ENCODE measurements at regions of chr2 and their contacts with region 1.

Region 1: DNA sequence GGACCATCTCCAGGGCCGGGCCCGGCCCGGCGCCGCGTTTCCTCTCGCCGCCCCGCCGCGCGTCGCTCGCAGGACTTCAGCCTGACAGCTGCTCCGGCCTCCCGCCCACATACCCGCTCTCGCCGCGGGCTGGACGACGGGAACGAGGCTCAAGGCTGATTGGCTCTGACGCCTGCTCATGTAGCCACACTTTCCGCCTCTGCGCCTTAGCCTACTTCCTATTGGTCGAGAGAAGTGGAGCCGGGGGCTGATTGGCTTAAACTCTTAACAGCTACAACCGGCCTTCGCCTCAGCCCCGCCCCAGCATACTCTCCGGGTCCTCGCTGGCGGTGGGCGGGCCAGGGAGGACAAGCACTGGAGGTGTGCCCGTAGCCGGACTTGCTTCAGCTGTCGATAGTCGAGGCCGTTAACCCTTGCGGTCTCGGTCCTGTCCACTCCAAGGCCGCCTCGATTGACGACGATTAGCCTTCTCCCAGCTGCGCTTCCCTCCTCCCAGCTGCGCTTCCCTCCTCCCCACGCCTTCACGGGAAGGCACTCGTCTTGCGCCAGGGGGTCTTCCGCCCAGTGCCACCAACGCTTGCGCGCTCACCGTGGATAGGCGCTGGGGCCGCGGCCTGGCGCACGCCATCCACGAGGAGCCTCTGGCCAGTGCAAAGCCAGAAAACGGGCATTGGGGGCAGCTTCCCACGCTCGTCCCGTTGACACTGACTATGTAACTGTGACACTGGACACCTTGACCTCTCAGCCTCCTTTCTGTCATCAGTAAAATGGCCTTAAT is at the start of gene PRADC1:
- DNase-seq: peak; percentile 85 to 97 (median 94)
- ATAC-seq: peak; percentile 77
- H3K4me3 ChIP-seq: peak within 1 kb of the TSS; percentile 80 to 98
- H3K4me3 Mint-ChIP-seq: peak within 1 kb of the TSS; percentile 97
- H3K27ac ChIP-seq: peak within 1 kb of the TSS; percentile 82 to 89
- H3K27ac Mint-ChIP-seq: peak within 1 kb of the TSS; percentile 97
- H3K4me1 ChIP-seq: peaks cover 23% of the 10 kb centered on the region
- H3K4me1 Mint-ChIP-seq: peaks cover 43% of the 10 kb centered on the region
- H3K27me3 ChIP-seq: no peaks in the 10 kb centered on the region
- H3K27me3 Mint-ChIP-seq: no peaks in the 10 kb centered on the region
- CTCF ChIP-seq: no peak
- total RNA-seq, gene PRADC1: 2.4 to 3.4 TPM

Region 2: GRCh38 chr2:73071360-73072133 is 161.8 kb before region 1 on chr2 and contains the start of gene SFXN5:
- CTCF ChIA-PET with region 1: no interaction called
- POLR2A ChIA-PET with region 1: interaction called, 12 read pairs
- intact Hi-C with region 1: loop called (anchors 1 kb)
- DNase-seq: peak; percentile 89 to 98 (median 95)
- ATAC-seq: peak; percentile 82
- H3K4me3 ChIP-seq: peak within 1 kb of the TSS; percentile 94 to 95
- H3K4me3 Mint-ChIP-seq: peak within 1 kb of the TSS; percentile 96
- H3K27ac ChIP-seq: peak within 1 kb of the TSS; percentile 73 to 86
- H3K27ac Mint-ChIP-seq: peak within 1 kb of the TSS; percentile 92
- H3K4me1 ChIP-seq: peaks cover 13% of the 10 kb centered on the region
- H3K4me1 Mint-ChIP-seq: peaks cover 41% of the 10 kb centered on the region
- H3K27me3 ChIP-seq: no peaks in the 10 kb centered on the region
- H3K27me3 Mint-ChIP-seq: no peaks in the 10 kb centered on the region
- CTCF ChIP-seq: no peak
- total RNA-seq, gene SFXN5: 6.1 to 9.3 TPM

Region 3: DNA sequence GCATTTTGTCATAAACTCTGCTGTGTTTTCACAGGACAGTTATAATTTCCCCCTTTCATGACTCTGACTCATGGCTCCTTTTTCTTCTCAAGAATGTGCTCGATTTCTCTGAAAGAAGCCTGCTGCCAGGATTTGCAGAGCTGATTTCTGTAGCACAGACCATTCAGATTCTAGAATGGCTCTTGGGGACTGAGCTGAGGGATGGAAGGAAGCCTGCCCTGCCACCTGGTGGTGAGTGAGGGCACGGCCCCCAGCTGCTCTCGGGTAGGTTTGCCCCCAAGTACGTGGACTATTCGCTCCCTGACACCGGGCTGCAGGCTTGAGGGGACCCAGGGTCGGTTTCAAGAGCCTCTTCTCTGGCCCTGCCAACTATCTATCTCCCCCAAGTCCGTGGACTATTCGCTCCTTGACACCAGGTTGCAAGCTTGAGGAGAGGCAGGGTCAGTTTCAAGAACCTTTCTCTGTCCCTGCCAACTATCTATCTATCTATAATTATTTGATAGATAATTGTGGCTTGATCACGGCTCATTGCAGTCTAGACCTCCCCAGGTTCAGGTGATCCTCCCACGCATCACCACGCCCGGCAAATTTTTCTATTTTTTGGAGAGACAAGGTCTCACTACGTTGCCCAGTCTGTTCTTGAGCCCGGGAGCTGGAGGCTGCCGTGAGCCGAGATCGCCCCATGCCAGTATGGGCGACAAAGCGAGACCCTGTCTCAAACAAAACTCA is 20.7 kb before region 1 on chr2:
- CTCF ChIA-PET with region 1: interaction called, 15 read pairs
- POLR2A ChIA-PET with region 1: interaction called, 25 read pairs
- intact Hi-C with region 1: loop called (anchors 1 kb)
- DNase-seq: peak; percentile 51 to 84 (median 73)
- ATAC-seq: peak; percentile 67
- H3K4me3 ChIP-seq: no peak overlapping the region
- H3K4me3 Mint-ChIP-seq: peak overlapping the region; percentile 98
- H3K27ac ChIP-seq: no peak overlapping the region
- H3K27ac Mint-ChIP-seq: peak overlapping the region; percentile 30
- H3K4me1 ChIP-seq: peaks cover 26% of the 10 kb centered on the region
- H3K4me1 Mint-ChIP-seq: peaks cover 33% of the 10 kb centered on the region
- H3K27me3 ChIP-seq: no peaks in the 10 kb centered on the region
- H3K27me3 Mint-ChIP-seq: peaks cover 7% of the 10 kb centered on the region
- CTCF ChIP-seq: peak; percentile 81

Region 4: GRCh38 chr2:73268830-73269685 is 35.7 kb after region 1 on chr2:
- CTCF ChIA-PET with region 1: interaction called, 3 read pairs
- POLR2A ChIA-PET with region 1: interaction called, 4 read pairs
- intact Hi-C with region 1: loop called (anchors 1 kb)
- DNase-seq: peak; percentile 52 to 90 (median 81)
- ATAC-seq: peak; percentile 98
- H3K4me3 ChIP-seq: peak overlapping the region; percentile 42 to 52
- H3K4me3 Mint-ChIP-seq: peak overlapping the region; percentile 70
- H3K27ac ChIP-seq: peak overlapping the region in 1 of 2 experiments; percentile 37
- H3K27ac Mint-ChIP-seq: no peak overlapping the region
- H3K4me1 ChIP-seq: peaks cover 12% of the 10 kb centered on the region
- H3K4me1 Mint-ChIP-seq: peaks cover 29% of the 10 kb centered on the region
- H3K27me3 ChIP-seq: no peaks in the 10 kb centered on the region
- H3K27me3 Mint-ChIP-seq: no peaks in the 10 kb centered on the region
- CTCF ChIP-seq: peak; percentile 21

Region 5: GRCh38 chr2:73385595-73386341 is 152.4 kb after region 1 on chr2 and contains the start of gene ALMS1:
- CTCF ChIA-PET with region 1: no interaction called
- POLR2A ChIA-PET with region 1: interaction called, 11 read pairs
- intact Hi-C with region 1: loop called (anchors 1 to 2 kb)
- DNase-seq: peak; percentile 76 to 96 (median 86)
- ATAC-seq: peak; percentile 88
- H3K4me3 ChIP-seq: peak within 1 kb of the TSS; percentile 75 to 88
- H3K4me3 Mint-ChIP-seq: peak within 1 kb of the TSS; percentile 88
- H3K27ac ChIP-seq: peak within 1 kb of the TSS; percentile 88 to 90
- H3K27ac Mint-ChIP-seq: peak within 1 kb of the TSS; percentile 94
- H3K4me1 ChIP-seq: peaks cover 20% of the 10 kb centered on the region
- H3K4me1 Mint-ChIP-seq: peaks cover 39% of the 10 kb centered on the region
- H3K27me3 ChIP-seq: no peaks in the 10 kb centered on the region
- H3K27me3 Mint-ChIP-seq: peaks cover 2% of the 10 kb centered on the region
- CTCF ChIP-seq: no peak
- total RNA-seq, gene ALMS1: 14.8 to 16.4 TPM

Region 6: DNA sequence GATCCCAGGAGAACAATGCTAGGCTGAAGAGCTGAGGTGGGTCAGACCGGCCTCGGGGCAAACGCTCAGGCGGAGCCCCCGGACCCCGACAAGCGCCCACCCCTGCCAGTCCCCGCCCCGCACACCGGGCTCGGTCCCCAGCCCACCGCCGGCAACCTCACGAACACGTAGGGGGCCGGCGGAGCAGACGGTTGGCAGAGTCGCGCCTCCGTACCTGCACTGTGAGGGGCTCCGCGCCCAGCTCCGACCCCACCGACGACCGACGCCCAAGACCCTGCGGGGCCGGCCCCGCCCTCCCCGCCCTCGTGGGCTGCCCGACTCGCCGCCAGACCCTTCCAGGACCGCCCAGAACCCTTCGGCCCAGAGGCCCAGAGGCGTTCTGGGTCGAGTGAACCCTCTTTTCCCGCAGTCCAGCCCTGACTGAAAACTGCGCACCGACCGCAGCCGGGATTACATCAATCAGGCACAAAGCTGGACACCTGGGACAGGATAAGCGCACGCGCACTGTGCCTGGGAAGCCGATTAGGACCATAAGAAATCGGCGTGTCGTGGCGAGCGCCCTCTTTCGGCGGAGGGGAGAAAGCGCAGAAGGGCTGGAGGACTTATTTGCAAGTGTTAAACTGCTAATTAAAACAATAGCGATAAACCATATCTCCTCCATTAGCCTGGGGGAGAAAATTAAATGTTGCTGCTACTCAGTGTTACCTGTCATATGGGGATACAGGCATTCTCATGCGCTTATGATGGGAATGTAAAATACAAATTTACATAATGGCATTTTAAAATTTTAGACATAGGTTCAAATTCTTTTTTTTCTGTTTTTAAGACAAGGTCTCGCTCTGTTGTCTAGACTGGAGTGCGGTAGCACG is 1158.5 kb after region 1 on chr2:
- CTCF ChIA-PET with region 1: no interaction called
- POLR2A ChIA-PET with region 1: no interaction called
- intact Hi-C with region 1: loop called (anchors 10 kb)
- DNase-seq: peak; percentile 91 to 98 (median 95)
- ATAC-seq: peak; percentile 90
- H3K4me3 ChIP-seq: peak overlapping the region; percentile 67 to 87
- H3K4me3 Mint-ChIP-seq: peak overlapping the region; percentile 99
- H3K27ac ChIP-seq: peak overlapping the region; percentile 87 to 96
- H3K27ac Mint-ChIP-seq: peak overlapping the region; percentile 100
- H3K4me1 ChIP-seq: peaks cover 20% of the 10 kb centered on the region
- H3K4me1 Mint-ChIP-seq: peaks cover 9% of the 10 kb centered on the region
- H3K27me3 ChIP-seq: no peaks in the 10 kb centered on the region
- H3K27me3 Mint-ChIP-seq: no peaks in the 10 kb centered on the region
- CTCF ChIP-seq: peak; percentile 96

Region 7: DNA sequence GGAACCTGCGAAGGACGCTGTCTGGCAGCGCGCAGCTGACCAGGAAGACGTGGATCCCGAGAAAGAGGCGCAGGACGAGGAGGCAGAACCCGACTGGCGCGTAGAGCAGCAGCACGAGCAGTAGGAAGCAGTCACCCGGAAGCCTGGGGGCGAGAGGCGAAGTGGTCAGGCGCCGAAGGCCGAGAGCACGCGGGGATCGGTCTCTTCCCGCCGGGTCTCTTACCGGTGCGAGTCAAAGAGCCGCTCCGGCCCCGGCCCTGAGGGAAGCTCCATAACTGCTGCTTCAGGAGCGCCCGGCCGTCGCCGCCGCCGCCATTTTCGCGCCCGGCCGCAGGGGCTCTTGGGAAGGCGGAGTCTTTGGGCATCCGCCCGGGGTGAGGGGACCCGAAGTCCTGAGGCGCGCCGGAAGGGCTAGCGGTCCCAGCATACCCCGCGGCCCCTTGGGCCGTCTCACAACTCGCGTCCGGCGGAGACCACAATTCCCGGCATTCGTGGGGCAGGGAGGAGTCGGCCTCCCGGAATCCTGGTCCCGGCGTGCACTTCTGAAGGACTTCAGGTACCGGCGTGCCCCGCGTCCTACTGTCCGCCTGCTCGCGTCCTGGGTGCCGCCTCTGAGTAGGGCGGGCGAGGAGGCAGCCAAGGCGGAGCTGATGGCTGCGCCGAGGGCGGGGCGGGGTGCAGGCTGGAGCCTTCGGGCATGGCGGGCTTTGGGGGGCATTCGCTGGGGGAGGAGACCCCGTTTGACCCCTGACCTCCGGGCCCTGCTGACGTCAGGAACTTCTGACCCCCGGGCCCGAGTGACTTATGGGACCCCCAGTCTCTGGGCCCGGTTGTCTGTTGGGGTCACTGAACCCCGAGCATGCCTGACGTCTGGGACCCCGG is 1296.3 kb after region 1 on chr2 and contains the starts of genes AUP1 and HTRA2:
- CTCF ChIA-PET with region 1: no interaction called
- POLR2A ChIA-PET with region 1: no interaction called
- intact Hi-C with region 1: loop called in 1 of 2 experiments (anchors 5 kb)
- DNase-seq: peak; percentile 70 to 93 (median 84)
- ATAC-seq: peak; percentile 89
- H3K4me3 ChIP-seq: peak within 1 kb of the TSS; percentile 95 to 99
- H3K4me3 Mint-ChIP-seq: peak within 1 kb of the TSS; percentile 93
- H3K27ac ChIP-seq: peak within 1 kb of the TSS; percentile 63 to 95
- H3K27ac Mint-ChIP-seq: peak within 1 kb of the TSS; percentile 95
- H3K4me1 ChIP-seq: peaks cover 25% of the 10 kb centered on the region
- H3K4me1 Mint-ChIP-seq: peaks cover 38% of the 10 kb centered on the region
- H3K27me3 ChIP-seq: no peaks in the 10 kb centered on the region
- H3K27me3 Mint-ChIP-seq: no peaks in the 10 kb centered on the region
- CTCF ChIP-seq: no peak
- total RNA-seq, gene AUP1: 201 to 202 TPM
- total RNA-seq, gene HTRA2: 15.7 TPM